Dorsolateral prefrontal cortex (tissue), 120 donors: ENCODE measurements at regions of chr14 and their contacts with region 1.

Region 1: DNA sequence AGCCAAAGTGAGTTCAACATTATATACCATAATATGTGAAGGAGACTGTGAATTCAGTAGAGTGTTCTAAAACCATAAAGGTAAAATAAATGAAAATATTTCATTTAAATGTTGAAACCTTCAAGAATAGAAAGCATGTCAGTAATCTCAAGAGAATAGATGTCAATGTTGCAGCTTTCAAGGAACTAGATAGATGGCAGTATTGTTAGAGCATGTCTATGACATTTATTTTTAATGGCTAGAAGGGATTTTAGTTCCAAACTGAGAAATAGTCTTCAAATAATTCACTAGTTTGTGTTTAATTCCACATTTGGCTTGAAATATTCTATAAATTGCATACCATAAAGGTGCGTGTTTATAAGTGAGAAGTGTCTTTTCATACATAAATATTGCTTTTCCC is 326.5 kb downstream of the FLRT2 start:
- DNase-seq: no peak
- H3K4me3 ChIP-seq: no peak overlapping the region
- H3K27ac ChIP-seq: no peak overlapping the region
- H3K27me3 ChIP-seq: no peaks in the 10 kb centered on the region
- CTCF ChIP-seq: peak in 55 of 56 donors; percentile 16 to 81 (median 58)

Region 2: GRCh38 chr14:85987292-85987691 is 130.9 kb after region 1 on chr14:
- intact Hi-C with region 1: loop called in 1 of 2 experiments (anchors 10 kb)
- DNase-seq: no peak
- H3K4me3 ChIP-seq: no peak overlapping the region
- H3K27ac ChIP-seq: no peak overlapping the region
- H3K27me3 ChIP-seq: no peaks in the 10 kb centered on the region
- CTCF ChIP-seq: no peak

Region 3: DNA sequence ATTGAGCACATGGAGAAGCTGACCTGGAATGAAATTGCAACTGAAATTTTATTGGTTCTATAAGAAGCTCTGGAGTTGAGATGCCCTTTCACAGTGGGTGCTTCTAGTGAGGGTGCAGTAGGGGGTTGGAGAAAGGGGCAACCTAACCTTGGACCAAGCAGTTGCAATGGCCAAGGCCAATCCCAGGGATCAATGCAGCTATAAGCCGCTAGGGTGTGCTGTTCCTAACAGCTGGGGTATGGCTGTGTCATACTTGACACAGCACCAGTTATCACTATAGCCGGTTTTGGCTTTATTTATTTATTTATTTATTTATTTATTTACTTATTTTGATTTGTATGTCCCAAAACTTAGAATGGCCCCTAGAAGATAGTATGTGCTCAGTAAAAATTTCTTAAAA is 179.5 kb after region 1 on chr14:
- intact Hi-C with region 1: loop called in 1 of 2 experiments (anchors 2 kb)
- DNase-seq: no peak
- H3K4me3 ChIP-seq: no peak overlapping the region
- H3K27ac ChIP-seq: no peak overlapping the region
- H3K27me3 ChIP-seq: no peaks in the 10 kb centered on the region
- CTCF ChIP-seq: peak in 3 of 56 donors; percentile 11 to 12 (median 12)

Region 4: GRCh38 chr14:86050072-86050683 is 193.7 kb after region 1 on chr14:
- intact Hi-C with region 1: loop called in 1 of 2 experiments (anchors 5 kb)
- DNase-seq: no peak
- H3K4me3 ChIP-seq: no peak overlapping the region
- H3K27ac ChIP-seq: no peak overlapping the region
- H3K27me3 ChIP-seq: no peaks in the 10 kb centered on the region
- CTCF ChIP-seq: no peak